Activated CD4-positive, alpha-beta T cell treated with anti-CD3 and anti-CD28 coated beads for 36 hours (primary cell): ENCODE measurements at regions of chr14 and their contacts with region 1.

Region 1: DNA sequence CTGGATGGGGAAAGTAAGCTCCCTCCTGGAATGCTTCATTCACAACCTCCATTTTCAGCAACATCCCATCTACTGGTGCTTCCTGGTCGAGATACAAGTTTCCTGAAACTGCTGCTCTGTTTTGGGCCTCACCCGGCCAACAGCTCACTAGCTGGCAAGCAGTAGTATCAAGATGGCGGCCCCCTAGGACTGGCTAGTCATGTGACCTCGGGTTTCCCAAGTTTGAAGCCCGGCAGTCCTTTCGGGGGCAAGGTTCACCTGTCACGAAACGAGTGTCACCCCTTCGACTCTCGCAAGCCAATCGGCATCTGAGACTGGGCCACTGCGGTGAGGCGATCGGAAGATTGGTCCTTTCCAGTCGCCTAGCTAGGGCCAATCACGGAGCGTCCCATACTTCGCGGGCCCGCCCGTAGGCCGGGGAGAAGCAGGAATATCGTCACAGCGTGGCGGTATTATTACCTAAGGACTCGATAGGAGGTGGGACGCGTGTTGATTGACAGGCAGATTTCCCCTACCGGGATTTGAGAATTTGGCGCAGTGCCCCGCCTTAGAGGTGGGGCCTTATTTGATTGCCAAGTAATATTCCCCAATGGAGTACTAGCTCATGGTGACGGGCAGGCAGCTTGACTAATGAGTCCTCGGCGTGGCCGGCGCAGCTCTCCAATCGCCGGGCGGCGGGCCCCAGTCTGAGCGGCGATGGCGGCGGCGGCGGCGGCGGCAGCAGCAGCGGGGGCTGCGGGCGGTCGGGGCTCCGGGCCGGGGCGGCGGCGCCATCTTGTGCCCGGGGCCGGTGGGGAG is at the start of gene PABPN1:
- DNase-seq: peak; percentile 98
- ATAC-seq: peak; percentile 91
- H3K4me3 Mint-ChIP-seq: peak within 1 kb of the TSS; percentile 93
- H3K27ac Mint-ChIP-seq: peak within 1 kb of the TSS; percentile 95
- H3K4me1 Mint-ChIP-seq: peaks cover 25% of the 10 kb centered on the region
- H3K27me3 Mint-ChIP-seq: no peaks in the 10 kb centered on the region
- total RNA-seq, gene PABPN1: 237 to 338 TPM

Region 2: GRCh38 chr14:22918804-22919600 is 402.0 kb before region 1 on chr14 and contains the start of gene RBM23:
- CTCF ChIA-PET with region 1: no interaction called
- POLR2A ChIA-PET with region 1: interaction called, 3 read pairs
- intact Hi-C with region 1: loop called in 1 of 2 experiments (anchors 1 kb)
- DNase-seq: peak; percentile 100
- ATAC-seq: peak; percentile 97
- H3K4me3 Mint-ChIP-seq: peak within 1 kb of the TSS; percentile 92
- H3K27ac Mint-ChIP-seq: peak within 1 kb of the TSS; percentile 99
- H3K4me1 Mint-ChIP-seq: peaks cover 40% of the 10 kb centered on the region
- H3K27me3 Mint-ChIP-seq: no peaks in the 10 kb centered on the region
- total RNA-seq, gene RBM23: 61.6 to 68.6 TPM

Region 3: DNA sequence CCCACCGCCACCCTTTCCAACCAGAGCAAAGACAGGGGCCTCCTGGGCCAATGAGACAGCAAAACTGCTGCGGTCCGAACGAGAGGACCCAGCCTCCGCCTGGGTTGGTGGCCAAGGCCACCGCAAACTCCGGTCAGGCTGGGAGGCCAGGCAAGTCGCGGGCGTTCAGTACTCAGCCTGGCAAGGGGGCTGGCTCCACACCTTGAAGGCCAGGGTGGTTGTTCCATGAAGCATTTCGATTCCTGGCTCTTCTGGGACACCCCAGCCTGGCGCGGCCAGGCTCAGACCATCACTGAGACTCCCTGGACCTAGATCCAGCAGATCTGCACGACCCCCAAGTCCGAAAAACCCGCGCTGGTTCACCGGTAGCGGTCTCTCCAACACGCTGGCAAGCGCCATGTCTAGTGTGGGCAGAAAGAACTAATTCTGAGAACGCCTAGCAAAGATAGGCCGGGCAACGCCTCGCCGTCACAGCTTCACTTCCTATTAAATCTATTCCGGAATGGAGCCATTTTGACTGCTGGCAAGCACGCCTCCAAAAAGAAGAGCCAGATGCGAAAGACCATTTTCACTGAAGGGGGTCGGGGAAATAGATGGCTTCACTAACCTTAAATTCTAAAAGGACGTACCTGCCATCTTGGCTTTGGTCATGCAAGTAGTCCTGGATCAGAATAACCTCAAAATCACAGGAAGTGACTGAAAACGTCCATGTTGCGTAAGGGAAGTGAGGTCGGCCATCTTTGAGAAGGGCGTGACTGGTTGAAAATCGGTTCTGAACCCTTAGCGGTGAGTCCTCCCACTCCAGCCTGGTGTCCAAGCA is 286.3 kb before region 1 on chr14 and contains the start of gene PSMB5:
- CTCF ChIA-PET with region 1: no interaction called
- POLR2A ChIA-PET with region 1: no interaction called
- intact Hi-C with region 1: loop called in 1 of 2 experiments (anchors 1 kb)
- DNase-seq: peak; percentile 94
- ATAC-seq: peak; percentile 95
- H3K4me3 Mint-ChIP-seq: peak within 1 kb of the TSS; percentile 97
- H3K27ac Mint-ChIP-seq: peak within 1 kb of the TSS; percentile 97
- H3K4me1 Mint-ChIP-seq: peaks cover 36% of the 10 kb centered on the region
- H3K27me3 Mint-ChIP-seq: no peaks in the 10 kb centered on the region
- total RNA-seq, gene PSMB5: 104 to 129 TPM

Region 4: GRCh38 chr14:23286020-23286905 is 34.7 kb before region 1 on chr14 and contains the start of gene HOMEZ:
- CTCF ChIA-PET with region 1: interaction called, 17 read pairs
- POLR2A ChIA-PET with region 1: interaction called, 15 read pairs
- intact Hi-C with region 1: loop called (anchors 1 kb)
- DNase-seq: peak; percentile 99
- ATAC-seq: peak; percentile 98
- H3K4me3 Mint-ChIP-seq: peak within 1 kb of the TSS; percentile 99
- H3K27ac Mint-ChIP-seq: peak within 1 kb of the TSS; percentile 95
- H3K4me1 Mint-ChIP-seq: peaks cover 18% of the 10 kb centered on the region
- H3K27me3 Mint-ChIP-seq: no peaks in the 10 kb centered on the region
- total RNA-seq, gene HOMEZ: 13.7 to 17.5 TPM

Region 5: DNA sequence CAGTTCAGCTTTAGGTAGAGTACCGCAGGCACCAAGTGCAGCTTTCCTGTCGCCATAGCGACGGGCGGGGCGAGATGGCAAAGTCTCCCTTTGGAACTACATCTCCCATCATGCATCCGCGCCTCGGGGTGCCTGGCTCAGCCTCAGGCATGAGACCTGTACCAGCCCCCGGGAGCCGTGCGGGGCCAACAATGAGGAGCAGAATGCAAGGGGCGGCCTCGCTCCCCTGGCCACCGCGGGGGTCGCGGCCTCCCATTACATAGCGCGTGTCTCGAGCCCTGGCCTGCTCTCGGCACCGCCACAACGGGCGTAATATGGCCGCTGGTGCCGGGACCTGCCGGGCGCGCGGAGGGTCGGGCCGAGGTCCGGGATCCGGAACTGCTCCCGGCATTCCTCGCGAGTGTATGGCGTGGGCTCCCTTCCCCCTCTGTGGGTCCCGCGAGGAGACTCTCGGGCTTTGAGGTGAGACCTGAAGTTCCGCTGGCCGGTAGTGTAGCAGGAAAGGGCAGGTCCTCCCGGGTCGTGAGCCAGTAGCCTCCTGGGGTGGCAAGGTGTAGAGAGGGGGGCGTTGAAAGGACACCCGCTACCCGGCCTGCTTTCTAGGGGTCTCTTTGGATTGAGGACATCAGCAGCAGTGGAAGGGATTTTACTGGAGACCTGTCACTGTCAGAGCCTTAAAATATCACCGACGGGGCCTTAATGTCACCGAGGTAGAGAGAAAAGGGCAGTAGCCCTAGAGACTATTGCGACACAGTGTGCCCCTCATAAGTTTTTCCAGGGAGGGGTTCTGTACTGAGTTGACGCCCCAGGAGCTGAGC is 235.1 kb after region 1 on chr14 and contains the start of gene THTPA:
- CTCF ChIA-PET with region 1: interaction called, 14 read pairs
- POLR2A ChIA-PET with region 1: no interaction called
- intact Hi-C with region 1: loop called (anchors 1 to 5 kb)
- DNase-seq: peak; percentile 96
- ATAC-seq: peak; percentile 83
- H3K4me3 Mint-ChIP-seq: peak within 1 kb of the TSS; percentile 95
- H3K27ac Mint-ChIP-seq: peak within 1 kb of the TSS; percentile 93
- H3K4me1 Mint-ChIP-seq: peaks cover 36% of the 10 kb centered on the region
- H3K27me3 Mint-ChIP-seq: no peaks in the 10 kb centered on the region
- total RNA-seq, gene THTPA: 8.3 to 8.5 TPM